Breast epithelium (tissue), 4 donors: ENCODE measurements at regions of chr9 and their contacts with region 1.

Region 1: GRCh38 chr9:73327149-73327548 is 175.5 kb downstream of the ANXA1 start:
- DNase-seq: no peak
- H3K4me3 ChIP-seq: no peak overlapping the region
- H3K27ac ChIP-seq: no peak overlapping the region
- H3K4me1 ChIP-seq: no peaks in the 10 kb centered on the region
- H3K27me3 ChIP-seq: no peaks in the 10 kb centered on the region
- CTCF ChIP-seq: no peak
- POLR2A ChIP-seq: no peak

Region 2: GRCh38 chr9:73357607-73358006 is 30.5 kb after region 1 on chr9:
- intact Hi-C with region 1: loop called (anchors 2 kb)
- DNase-seq: no peak
- H3K4me3 ChIP-seq: no peak overlapping the region
- H3K27ac ChIP-seq: no peak overlapping the region
- H3K4me1 ChIP-seq: no peaks in the 10 kb centered on the region
- H3K27me3 ChIP-seq: no peaks in the 10 kb centered on the region
- CTCF ChIP-seq: no peak
- POLR2A ChIP-seq: no peak

Region 3: DNA sequence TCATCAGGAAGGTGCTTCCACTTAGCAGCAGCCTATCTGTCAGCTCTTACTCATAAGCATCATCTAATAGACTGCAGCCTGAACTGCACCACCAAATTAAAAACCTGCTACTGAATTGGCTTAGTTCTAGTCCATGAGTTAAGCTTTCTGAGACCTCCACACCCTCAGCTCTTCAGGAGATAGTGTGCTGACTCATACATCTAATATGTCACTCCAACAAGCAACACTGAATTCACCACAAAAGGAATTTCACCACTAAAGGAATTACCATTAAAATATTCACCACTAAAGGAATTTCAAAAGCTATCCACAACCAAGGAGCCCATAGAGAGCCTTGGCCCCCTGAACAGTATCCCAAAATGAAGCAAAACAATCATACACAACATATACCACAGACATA is 751.5 kb after region 1 on chr9:
- intact Hi-C with region 1: loop called (anchors 10 kb)
- DNase-seq: no peak
- H3K4me3 ChIP-seq: no peak overlapping the region
- H3K27ac ChIP-seq: no peak overlapping the region
- H3K4me1 ChIP-seq: no peaks in the 10 kb centered on the region
- H3K27me3 ChIP-seq: no peaks in the 10 kb centered on the region
- CTCF ChIP-seq: no peak
- POLR2A ChIP-seq: no peak